ENCODE measurements at regions of chr17 and their contacts with region 1.

Region 1: DNA sequence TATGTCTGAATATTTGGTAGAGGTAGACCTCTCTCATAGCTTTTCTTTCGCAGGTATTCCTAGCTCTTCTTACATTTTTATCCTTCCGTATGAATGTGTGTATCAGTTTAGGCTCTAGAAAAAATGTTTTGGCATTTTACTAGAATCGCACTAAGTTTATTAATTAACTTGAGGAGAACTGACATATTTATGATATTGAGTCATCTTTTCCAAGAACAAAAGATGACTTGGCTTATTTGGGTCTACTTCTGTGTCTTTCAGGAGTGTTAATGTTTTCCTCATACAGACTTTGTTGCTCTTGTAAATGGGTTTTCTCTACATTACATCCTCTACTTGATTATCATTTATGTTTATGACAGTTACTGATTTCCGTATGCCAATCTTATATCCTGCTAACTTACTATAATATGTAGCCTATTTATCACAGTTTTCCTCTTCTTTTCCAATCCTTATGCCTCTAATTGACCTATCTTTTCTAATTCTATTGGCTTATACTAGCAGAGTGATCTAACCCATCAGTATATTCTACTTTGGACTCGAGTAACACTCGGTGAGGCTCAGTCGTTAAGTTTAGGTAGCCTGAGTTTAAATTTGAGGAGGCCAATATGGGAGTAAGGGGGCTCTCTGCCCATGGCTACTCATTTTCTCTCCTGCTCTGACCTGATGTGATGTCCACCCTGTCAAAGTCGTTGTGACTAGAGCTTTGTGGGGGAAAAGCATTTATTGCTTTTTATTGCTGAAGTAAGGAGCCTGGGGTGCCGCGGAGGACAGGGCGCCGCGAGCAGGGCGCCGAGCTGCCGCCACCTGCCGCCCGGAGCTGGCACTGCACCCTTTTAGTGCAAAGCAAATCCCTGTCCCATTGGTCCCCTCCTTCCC is 20.0 kb downstream of the ST6GALNAC1 start:
- DNase-seq: peak; percentile 63 to 78 (median 77)
- H3K4me3 ChIP-seq: peak overlapping the region in 1 of 7 experiments; percentile 16
- H3K27ac ChIP-seq: no peak overlapping the region
- H3K4me1 ChIP-seq: peaks cover 0 to 6% (median 0%) of the 10 kb centered on the region in 4 experiments
- H3K27me3 ChIP-seq: peaks cover 0 to 2% (median 0%) of the 10 kb centered on the region in 5 experiments

Region 2: GRCh38 chr17:76492123-76492988 is 131.2 kb before region 1 on chr17:
- CTCF ChIA-PET with region 1: no interaction called
- POLR2A ChIA-PET with region 1: no interaction called
- DNase-seq: peak in 2 of 3 donors; percentile 33 to 49
- H3K4me3 ChIP-seq: peak overlapping the region in 5 of 7 experiments; percentile 24 to 63 (median 50)
- H3K27ac ChIP-seq: peak overlapping the region in 1 of 2 experiments; percentile 73
- H3K4me1 ChIP-seq: peaks cover 0 to 52% (median 36%) of the 10 kb centered on the region in 4 experiments
- H3K27me3 ChIP-seq: no peaks in the 10 kb centered on the region

Region 3: DNA sequence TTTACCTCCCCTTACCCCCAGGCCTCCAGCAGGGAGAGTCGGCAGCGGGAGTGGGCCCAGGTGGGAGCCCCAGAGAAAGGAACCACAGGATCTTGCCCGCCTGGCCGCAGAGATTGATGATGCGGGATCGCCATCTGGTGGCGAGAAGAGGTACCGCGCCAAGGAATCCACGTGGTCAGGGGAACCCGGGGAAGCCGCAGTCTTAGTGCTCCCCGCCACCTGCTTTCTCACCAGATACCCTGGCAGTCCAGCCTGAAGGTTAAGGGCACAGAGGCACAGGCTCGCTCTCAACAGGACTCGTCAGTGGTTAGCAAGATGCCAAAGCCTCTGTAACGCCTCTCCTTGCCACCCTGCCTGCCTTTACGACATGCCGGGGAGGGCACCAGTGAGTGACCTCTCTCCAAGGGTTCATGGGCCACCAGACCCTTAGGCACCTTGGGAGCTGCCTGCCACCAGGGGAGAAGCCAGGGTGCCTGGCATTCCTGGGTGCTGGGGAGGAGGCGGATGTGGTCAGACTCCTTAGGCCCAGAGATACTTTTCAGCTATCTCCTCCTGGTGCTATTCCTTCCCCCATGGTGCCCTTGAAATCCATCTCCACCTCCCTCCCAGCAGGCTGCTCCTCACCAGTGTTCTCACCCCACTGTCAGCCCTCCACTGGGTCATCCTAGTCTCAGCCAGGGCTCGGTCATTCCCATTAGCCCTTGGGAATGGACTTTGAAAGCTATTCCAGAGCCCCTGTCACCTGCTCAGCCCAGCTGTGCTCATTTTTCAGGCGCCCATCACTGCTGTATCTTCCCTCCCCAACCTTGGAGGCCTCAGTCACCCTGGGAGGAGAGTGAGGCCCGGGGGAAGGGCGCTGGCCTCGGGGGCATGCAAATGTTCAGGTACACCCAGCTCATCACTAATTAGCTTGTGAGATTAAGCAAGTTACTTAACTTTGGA is 116.8 kb before region 1 on chr17:
- CTCF ChIA-PET with region 1: interaction called, 11 read pairs
- POLR2A ChIA-PET with region 1: no interaction called
- DNase-seq: peak; percentile 69 to 82 (median 76)
- H3K4me3 ChIP-seq: peak overlapping the region in 1 of 7 experiments; percentile 23
- H3K27ac ChIP-seq: no peak overlapping the region
- H3K4me1 ChIP-seq: peaks cover 0 to 17% (median 5%) of the 10 kb centered on the region in 4 experiments
- H3K27me3 ChIP-seq: no peaks in the 10 kb centered on the region

Region 4: GRCh38 chr17:76612977-76613851 is 10.3 kb before region 1 on chr17:
- CTCF ChIA-PET with region 1: interaction called, 15 read pairs
- POLR2A ChIA-PET with region 1: no interaction called
- DNase-seq: no peak
- H3K4me3 ChIP-seq: no peak overlapping the region
- H3K27ac ChIP-seq: no peak overlapping the region
- H3K4me1 ChIP-seq: peaks cover 0 to 12% (median 4%) of the 10 kb centered on the region in 4 experiments
- H3K27me3 ChIP-seq: no peaks in the 10 kb centered on the region

Region 5: GRCh38 chr17:76635039-76635438 is 11.5 kb after region 1 on chr17:
- CTCF ChIA-PET with region 1: interaction called, 12 read pairs
- POLR2A ChIA-PET with region 1: interaction called, 3 read pairs
- DNase-seq: no peak
- H3K4me3 ChIP-seq: no peak overlapping the region
- H3K27ac ChIP-seq: no peak overlapping the region
- H3K4me1 ChIP-seq: no peaks in the 10 kb centered on the region
- H3K27me3 ChIP-seq: no peaks in the 10 kb centered on the region

Region 6: DNA sequence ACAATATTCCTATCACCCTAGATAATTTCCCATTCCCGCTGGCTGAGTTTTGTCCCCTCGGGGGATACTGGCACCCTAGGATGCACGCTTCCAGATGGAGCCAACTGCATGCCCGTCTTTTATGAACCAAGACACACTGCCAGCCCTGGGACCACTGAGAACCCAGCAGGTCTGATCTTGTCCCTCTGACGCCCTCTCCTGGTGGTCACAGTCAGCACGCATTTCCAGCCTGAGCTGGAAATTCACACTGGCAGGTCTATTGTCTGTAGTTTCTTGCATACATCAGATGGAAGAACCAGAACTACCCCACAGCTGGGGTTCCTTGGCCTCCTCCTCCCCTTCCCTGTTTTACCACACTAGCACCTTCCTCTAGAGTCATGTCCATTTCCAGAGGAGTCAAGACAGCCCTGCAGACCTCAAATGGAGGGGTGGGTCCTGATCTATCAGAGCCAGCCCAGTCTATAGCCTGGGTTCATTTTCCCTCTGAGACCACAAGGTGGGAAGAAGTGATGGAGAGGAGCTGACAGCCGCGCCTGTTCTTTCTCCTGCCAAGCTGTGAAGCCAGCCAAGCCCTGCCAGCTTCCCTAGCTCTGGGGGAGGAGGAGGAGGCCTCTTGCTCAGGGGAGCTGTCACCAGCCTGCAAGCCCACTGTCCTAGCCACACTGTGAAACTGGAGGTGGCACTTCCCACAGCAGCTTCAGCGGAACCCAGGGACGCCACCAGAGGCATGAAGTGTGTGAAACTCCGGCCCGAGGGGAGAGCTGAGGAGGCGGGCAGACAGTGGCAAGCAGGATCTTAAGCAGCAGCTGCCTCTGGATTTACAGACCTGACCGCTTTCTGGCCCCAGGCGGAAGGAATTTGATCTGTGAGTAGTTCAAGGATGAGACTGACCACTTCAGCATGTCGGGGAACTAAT is 58.0 kb after region 1 on chr17:
- CTCF ChIA-PET with region 1: interaction called, 10 read pairs
- POLR2A ChIA-PET with region 1: no interaction called
- DNase-seq: peak; percentile 70 to 86 (median 78)
- H3K4me3 ChIP-seq: no peak overlapping the region
- H3K27ac ChIP-seq: no peak overlapping the region
- H3K4me1 ChIP-seq: peaks cover 0 to 5% (median 1%) of the 10 kb centered on the region in 4 experiments
- H3K27me3 ChIP-seq: no peaks in the 10 kb centered on the region

Region 7: DNA sequence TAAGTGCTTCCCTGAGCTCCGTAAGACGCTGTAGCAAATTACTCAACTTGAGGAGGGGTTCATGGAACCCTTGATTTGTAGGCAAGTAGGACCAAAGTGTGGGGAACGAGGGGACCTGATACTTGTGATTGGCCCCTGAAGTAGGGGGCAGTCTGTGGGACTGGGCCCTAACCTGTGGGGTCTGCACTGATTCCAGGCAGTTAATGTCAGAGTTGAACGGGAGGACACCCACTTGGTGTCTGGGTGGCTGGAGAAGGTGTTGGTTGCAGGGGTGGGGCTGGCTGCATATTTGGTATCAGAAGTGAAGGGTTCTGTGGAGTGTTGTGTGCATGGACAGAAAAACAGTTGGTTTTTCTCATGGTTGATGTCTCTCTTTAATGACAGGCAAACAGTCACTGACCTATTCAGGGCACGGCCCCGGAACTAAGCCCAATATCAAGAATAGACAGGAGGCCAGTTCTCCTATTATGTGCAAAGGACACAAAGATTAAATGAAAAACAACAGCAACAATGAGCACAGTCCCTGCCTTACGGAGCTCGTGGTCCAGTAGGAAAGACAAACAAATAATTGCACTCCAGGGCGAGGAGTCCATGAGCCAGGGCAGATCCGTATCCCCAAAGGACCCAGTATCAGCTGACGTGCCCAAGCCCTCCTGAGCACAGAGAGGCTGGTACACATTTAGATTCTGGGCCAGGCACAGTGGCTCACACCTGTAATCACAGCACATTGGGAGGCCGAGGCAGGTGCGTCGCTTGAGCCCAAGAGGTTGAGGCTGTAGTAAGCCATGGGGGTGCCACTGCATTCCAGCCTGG is 68.1 kb after region 1 on chr17:
- CTCF ChIA-PET with region 1: no interaction called
- POLR2A ChIA-PET with region 1: no interaction called
- DNase-seq: no peak
- H3K4me3 ChIP-seq: no peak overlapping the region
- H3K27ac ChIP-seq: no peak overlapping the region
- H3K4me1 ChIP-seq: no peaks in the 10 kb centered on the region
- H3K27me3 ChIP-seq: no peaks in the 10 kb centered on the region

Region 8: GRCh38 chr17:76704805-76705204 is 81.3 kb after region 1 on chr17:
- CTCF ChIA-PET with region 1: no interaction called
- POLR2A ChIA-PET with region 1: no interaction called
- DNase-seq: no peak
- H3K4me3 ChIP-seq: peak overlapping the region in 1 of 7 experiments; percentile 28
- H3K27ac ChIP-seq: no peak overlapping the region
- H3K4me1 ChIP-seq: peaks cover 0 to 11% (median 5%) of the 10 kb centered on the region in 4 experiments
- H3K27me3 ChIP-seq: peaks cover 0 to 6% (median 0%) of the 10 kb centered on the region in 5 experiments

Measured in common myeloid progenitor, CD34-positive (primary cell).